SK-N-SH (cell line): ENCODE measurements at regions of chr20 and their contacts with region 1.

Region 1: GRCh38 chr20:18507218-18508021 is at the start of gene SEC23B:
- DNase-seq: peak; percentile 90
- H3K4me3 ChIP-seq: peak within 1 kb of the TSS; percentile 81 to 95
- H3K27ac ChIP-seq: peak within 1 kb of the TSS; percentile 96 to 99
- H3K4me1 ChIP-seq: peaks cover 10 to 12% of the 10 kb centered on the region in 2 experiments; a peak in 1 of 4 replicates
- H3K27me3 ChIP-seq: no peaks in the 10 kb centered on the region
- CTCF ChIP-seq: no peak
- EP300 ChIP-seq: no peak
- RAD21 ChIP-seq: no peak
- polyA plus RNA-seq, gene SEC23B: 55.2 and 68.3 TPM in 2 replicates

Region 2: GRCh38 chr20:18287915-18288748 is 219.3 kb before region 1 on chr20 and contains the start of gene ZNF133:
- CTCF ChIA-PET with region 1: no interaction called
- POLR2A ChIA-PET with region 1: interaction called, 13 read pairs
- DNase-seq: peak; percentile 93
- H3K4me3 ChIP-seq: peak within 1 kb of the TSS; percentile 95 to 99
- H3K27ac ChIP-seq: peak within 1 kb of the TSS; percentile 84 to 98
- H3K4me1 ChIP-seq: peaks cover 6 to 14% of the 10 kb centered on the region in 2 experiments; a peak in 3 of 4 replicates
- H3K27me3 ChIP-seq: no peaks in the 10 kb centered on the region
- CTCF ChIP-seq: peak; percentile 27; the same call in 1 of the 2 replicates
- EP300 ChIP-seq: no peak
- RAD21 ChIP-seq: no peak
- polyA plus RNA-seq, gene ZNF133: 15.5 and 20.6 TPM in 2 replicates

Region 3: DNA sequence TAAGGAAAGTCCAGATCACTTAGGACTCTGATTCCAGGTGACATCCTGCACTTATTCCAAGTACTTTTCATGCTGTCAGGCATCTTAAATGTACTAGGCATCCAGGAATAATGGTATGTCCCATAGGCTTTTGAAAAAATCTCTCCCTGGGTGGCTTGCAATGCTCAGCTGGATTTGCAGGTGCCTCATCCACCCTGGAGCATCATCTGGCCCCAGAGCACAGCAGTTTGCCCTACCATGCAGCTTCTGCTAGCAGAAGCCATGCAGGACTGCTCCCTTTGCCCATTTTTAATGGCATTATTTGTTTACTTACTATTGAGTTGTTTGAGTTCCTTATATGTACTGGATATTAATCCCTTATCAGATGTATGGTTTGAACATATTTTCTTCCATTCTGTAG is 85.8 kb before region 1 on chr20:
- CTCF ChIA-PET with region 1: no interaction called
- POLR2A ChIA-PET with region 1: no interaction called
- DNase-seq: no peak
- H3K4me3 ChIP-seq: no peak overlapping the region
- H3K27ac ChIP-seq: no peak overlapping the region
- H3K4me1 ChIP-seq: no peaks in the 10 kb centered on the region
- H3K27me3 ChIP-seq: no peaks in the 10 kb centered on the region
- CTCF ChIP-seq: no peak
- EP300 ChIP-seq: no peak
- RAD21 ChIP-seq: no peak

Region 4: DNA sequence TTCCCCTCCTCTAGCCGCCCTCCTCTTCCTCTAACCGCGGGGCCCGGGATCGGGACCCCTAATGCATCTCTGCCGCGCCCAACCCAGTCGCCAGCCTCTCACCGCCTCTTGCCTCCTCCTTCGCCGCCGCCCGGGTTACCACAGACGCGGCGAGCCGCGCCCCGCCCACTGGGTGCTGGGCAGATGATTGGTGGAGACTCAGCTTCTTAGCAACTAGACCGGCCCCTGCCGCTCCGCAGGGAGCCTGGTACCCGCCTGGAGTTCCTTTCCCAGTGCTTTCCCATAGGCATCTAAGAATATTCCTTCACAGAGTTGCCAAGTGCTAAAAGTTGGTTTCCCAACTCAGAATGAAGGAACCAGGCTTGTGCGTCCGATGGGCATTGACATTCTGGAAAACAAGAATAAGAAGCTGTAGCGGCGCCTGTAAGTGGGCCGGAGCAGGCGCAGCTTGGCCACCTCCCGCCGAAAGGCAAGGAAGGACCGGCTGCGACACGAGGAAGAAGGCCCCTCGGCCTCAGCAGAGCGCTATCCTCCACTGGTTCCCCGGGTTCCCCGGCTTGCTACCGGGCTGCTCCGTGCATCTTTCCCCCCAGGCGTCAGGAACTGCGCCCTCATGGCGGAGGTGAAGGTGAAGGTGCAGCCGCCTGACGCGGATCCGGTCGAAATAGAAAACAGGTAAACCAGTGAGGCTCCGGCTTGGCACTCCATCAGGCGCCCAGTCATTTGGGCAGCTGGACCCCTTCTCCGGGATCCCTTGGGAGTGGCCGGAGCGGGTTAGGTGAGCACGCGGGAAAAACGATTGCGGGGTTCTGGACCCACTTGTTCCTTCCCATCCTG is 40.3 kb before region 1 on chr20 and contains the starts of genes DZANK1 and POLR3F:
- CTCF ChIA-PET with region 1: no interaction called
- POLR2A ChIA-PET with region 1: interaction called, 18 read pairs
- DNase-seq: peak; percentile 95
- H3K4me3 ChIP-seq: peak within 1 kb of the TSS; percentile 94
- H3K27ac ChIP-seq: peak within 1 kb of the TSS; percentile 96
- H3K4me1 ChIP-seq: peaks cover 0 to 7% of the 10 kb centered on the region in 2 experiments; a peak in 2 of 4 replicates
- H3K27me3 ChIP-seq: no peaks in the 10 kb centered on the region
- CTCF ChIP-seq: no peak
- EP300 ChIP-seq: 0 out of 4 replicates have a peak, but pooled peaks of 1 of the 2 experiments have one; percentile 7
- RAD21 ChIP-seq: no peak
- polyA plus RNA-seq, gene DZANK1: 3.3 and 4.6 TPM in 2 replicates
- polyA plus RNA-seq, gene POLR3F: 4.8 and 6.3 TPM in 2 replicates

Region 5: GRCh38 chr20:18496740-18497592 is 10.5 kb before region 1 on chr20 and contains the start of gene RBBP9:
- CTCF ChIA-PET with region 1: interaction called, 11 read pairs
- POLR2A ChIA-PET with region 1: interaction called, 58 read pairs
- DNase-seq: peak; percentile 92
- H3K4me3 ChIP-seq: peak within 1 kb of the TSS; percentile 94 to 95
- H3K27ac ChIP-seq: peak within 1 kb of the TSS; percentile 49 to 82; a peak in 3 of 4 replicates
- H3K4me1 ChIP-seq: peaks cover 5 to 7% of the 10 kb centered on the region in 2 experiments; a peak in 3 of 4 replicates
- H3K27me3 ChIP-seq: no peaks in the 10 kb centered on the region
- CTCF ChIP-seq: no peak
- EP300 ChIP-seq: no peak
- RAD21 ChIP-seq: no peak
- polyA plus RNA-seq, gene RBBP9: 7.5 and 10.1 TPM in 2 replicates

Region 6: GRCh38 chr20:18524646-18525045 is 17.2 kb after region 1 on chr20:
- CTCF ChIA-PET with region 1: no interaction called
- POLR2A ChIA-PET with region 1: no interaction called
- DNase-seq: no peak
- H3K4me3 ChIP-seq: no peak overlapping the region
- H3K27ac ChIP-seq: no peak overlapping the region
- H3K4me1 ChIP-seq: no peaks in the 10 kb centered on the region
- H3K27me3 ChIP-seq: no peaks in the 10 kb centered on the region
- CTCF ChIP-seq: no peak
- EP300 ChIP-seq: no peak
- RAD21 ChIP-seq: no peak

Region 7: DNA sequence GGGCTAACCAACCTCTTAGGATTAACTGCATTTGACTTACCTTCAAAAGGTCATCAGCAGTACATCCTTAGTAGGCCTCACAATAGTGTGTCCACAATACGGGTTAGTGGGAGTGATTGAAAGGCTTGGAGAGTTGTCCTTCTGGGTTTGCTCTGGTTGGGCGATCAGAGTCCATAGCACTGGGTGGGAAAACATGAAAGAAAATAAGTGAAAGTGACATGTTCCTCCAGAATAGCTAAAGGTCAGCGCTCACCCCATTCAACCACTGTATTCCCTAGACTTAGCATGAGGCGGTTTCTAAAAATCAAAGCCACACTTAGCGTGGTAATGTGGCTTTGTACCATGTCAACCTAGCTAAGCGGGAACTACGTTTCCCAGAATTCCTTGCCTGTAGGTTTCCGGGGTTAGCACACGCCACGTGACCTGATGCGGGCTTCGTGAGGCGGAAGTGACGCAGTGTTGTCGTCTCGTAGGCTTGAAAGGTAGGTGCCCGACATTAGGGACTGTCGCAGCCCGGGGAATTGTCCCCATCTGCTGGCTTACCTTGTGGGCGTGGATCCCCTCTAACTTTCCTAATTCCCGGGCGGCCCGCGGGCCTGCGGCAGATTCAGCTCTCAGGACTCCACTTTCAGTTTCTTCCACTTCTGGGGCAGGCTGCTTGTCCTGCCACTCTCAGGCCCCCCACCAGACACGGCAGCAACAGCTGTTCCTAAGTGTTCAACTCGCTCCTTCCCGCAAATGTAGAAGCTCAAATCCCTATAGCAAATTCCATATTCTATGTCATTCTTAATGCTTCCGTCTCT is 286.4 kb after region 1 on chr20:
- CTCF ChIA-PET with region 1: no interaction called
- POLR2A ChIA-PET with region 1: no interaction called
- DNase-seq: peak; percentile 80
- H3K4me3 ChIP-seq: peak overlapping the region; percentile 83 to 91
- H3K27ac ChIP-seq: peak overlapping the region; percentile 59 to 69; a peak in 3 of 4 replicates
- H3K4me1 ChIP-seq: peaks cover 0 to 6% of the 10 kb centered on the region in 2 experiments; a peak in 2 of 4 replicates
- H3K27me3 ChIP-seq: no peaks in the 10 kb centered on the region
- CTCF ChIP-seq: no peak
- EP300 ChIP-seq: no peak
- RAD21 ChIP-seq: peak; percentile 39